ENCODE measurements at regions of chr17 and their contacts with region 1.

Region 1: DNA sequence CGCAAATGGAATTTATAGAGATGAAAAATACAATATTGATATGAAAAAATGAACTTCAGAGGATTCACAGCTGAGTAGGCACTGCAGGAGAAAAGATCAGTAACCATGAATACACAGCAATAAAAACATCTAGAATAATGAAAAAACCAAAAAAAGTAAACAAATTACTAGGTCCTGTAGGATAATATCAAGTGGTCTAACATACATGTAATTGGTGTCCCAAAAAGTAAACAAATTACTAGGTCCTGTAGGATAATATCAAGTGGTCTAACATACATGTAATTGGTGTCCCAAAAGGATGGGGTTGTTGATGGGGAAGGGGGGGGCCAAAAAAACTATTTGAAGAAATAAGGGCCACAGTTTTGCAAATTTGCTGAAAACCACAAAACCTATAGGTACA is 43.4 kb downstream of the ZNF18 start:
- DNase-seq: no peak
- H3K4me3 ChIP-seq: no peak overlapping the region
- H3K27ac ChIP-seq: no peak overlapping the region
- H3K4me1 ChIP-seq: peaks cover 0 to 39% (median 0%) of the 10 kb centered on the region in 3 donors
- H3K27me3 ChIP-seq: no peaks in the 10 kb centered on the region
- CTCF ChIP-seq: no peak
- POLR2A ChIP-seq: no peak

Region 2: GRCh38 chr17:11786711-11787438 is 167.0 kb before region 1 on chr17:
- intact Hi-C with region 1: no loop called
- DNase-seq: no peak
- H3K4me3 ChIP-seq: no peak overlapping the region
- H3K27ac ChIP-seq: no peak overlapping the region
- H3K4me1 ChIP-seq: no peaks in the 10 kb centered on the region
- H3K27me3 ChIP-seq: no peaks in the 10 kb centered on the region
- CTCF ChIP-seq: no peak
- POLR2A ChIP-seq: no peak

Region 3: DNA sequence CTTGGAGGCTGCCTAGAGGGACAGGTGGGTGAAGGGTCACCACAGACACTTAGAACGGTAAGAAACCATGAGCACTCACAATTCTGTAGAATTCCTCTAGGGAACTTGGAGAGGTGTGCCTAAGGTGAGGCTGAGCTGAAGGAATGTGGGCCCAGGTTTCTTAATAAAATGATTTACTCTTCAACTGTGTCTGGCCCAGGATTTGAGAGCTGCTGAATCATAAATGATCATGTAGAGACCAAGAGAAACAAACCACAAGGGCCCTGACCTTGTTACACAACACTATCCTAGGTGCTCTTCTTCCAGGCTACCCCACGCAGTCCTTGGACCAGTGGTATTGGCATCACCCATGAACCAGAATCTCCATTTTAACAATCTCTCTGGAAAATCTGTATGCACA is 15.6 kb after region 1 on chr17:
- intact Hi-C with region 1: loop called (anchors 2 kb)
- DNase-seq: no peak
- H3K4me3 ChIP-seq: no peak overlapping the region
- H3K27ac ChIP-seq: peak overlapping the region; percentile 74 to 86 (median 82)
- H3K4me1 ChIP-seq: peaks cover 3 to 49% (median 13%) of the 10 kb centered on the region in 3 donors
- H3K27me3 ChIP-seq: no peaks in the 10 kb centered on the region
- CTCF ChIP-seq: no peak
- POLR2A ChIP-seq: no peak

Region 4: GRCh38 chr17:12107905-12108304 is 154.0 kb after region 1 on chr17:
- intact Hi-C with region 1: no loop called
- DNase-seq: no peak
- H3K4me3 ChIP-seq: no peak overlapping the region
- H3K27ac ChIP-seq: no peak overlapping the region
- H3K4me1 ChIP-seq: peaks cover 0 to 6% (median 0%) of the 10 kb centered on the region in 3 donors
- H3K27me3 ChIP-seq: no peaks in the 10 kb centered on the region
- CTCF ChIP-seq: no peak
- POLR2A ChIP-seq: no peak

Measured in esophagus squamous epithelium (tissue), 5 donors.